ENCODE measurements at regions of chr5 and their contacts with region 1.

Region 1: DNA sequence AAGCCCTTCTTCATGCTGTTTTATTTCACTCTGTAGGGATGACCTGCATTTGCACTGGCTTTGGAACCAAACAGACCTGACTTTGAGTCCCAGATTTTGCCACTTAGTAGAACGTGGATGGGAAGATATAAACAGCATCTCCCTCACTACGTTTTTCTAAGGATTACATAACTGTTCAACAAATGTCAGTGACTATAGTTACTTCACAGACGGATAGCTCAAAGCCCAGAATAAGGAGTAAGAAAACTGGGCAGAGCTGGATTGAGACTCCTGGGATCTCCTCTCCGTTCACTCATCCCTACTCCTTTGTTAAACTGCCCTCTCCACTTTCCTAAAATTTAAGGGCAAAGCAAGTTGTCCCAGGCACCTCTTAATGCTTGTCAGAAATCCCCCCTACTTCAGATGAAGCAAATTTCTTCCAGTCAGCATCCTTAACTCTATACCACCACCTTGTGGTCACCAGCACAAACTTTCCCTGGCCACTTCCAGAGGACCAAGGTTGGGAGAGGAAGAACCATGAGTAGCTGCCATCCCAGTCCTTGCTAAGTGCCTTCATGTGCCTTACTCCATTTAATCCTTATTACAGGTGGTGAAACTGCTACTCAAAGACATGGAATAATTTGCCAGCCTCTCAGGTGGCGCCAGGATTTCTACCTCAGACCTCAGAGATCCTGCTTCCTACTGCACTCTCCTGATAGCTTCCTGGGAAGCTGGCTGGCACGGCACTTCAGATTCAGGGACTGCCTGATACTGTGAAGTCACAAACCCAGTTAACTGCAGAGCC is 38.4 kb downstream of the EGR1 start:
- DNase-seq: peak; percentile 86
- H3K4me3 Mint-ChIP-seq: no peak overlapping the region
- H3K27ac Mint-ChIP-seq: no peak overlapping the region
- H3K4me1 Mint-ChIP-seq: peaks cover 58% of the 10 kb centered on the region
- H3K27me3 Mint-ChIP-seq: no peaks in the 10 kb centered on the region
- CTCF ChIP-seq: peak; percentile 79

Region 2: GRCh38 chr5:138458384-138458783 is 45.3 kb before region 1 on chr5:
- CTCF ChIA-PET with region 1: interaction called, 278 read pairs
- POLR2A ChIA-PET with region 1: interaction called, 626 read pairs
- intact Hi-C with region 1: no loop called
- DNase-seq: no peak
- H3K4me3 Mint-ChIP-seq: no peak overlapping the region
- H3K27ac Mint-ChIP-seq: no peak overlapping the region
- H3K4me1 Mint-ChIP-seq: peaks cover 15% of the 10 kb centered on the region
- H3K27me3 Mint-ChIP-seq: no peaks in the 10 kb centered on the region
- CTCF ChIP-seq: no peak

Region 3: GRCh38 chr5:138469540-138470321 is 33.9 kb before region 1 on chr5:
- CTCF ChIA-PET with region 1: interaction called, 268 read pairs
- POLR2A ChIA-PET with region 1: interaction called, 626 read pairs
- intact Hi-C with region 1: loop called (anchors 1 kb)
- DNase-seq: peak; percentile 78
- H3K4me3 Mint-ChIP-seq: no peak overlapping the region
- H3K27ac Mint-ChIP-seq: peak overlapping the region; percentile 93
- H3K4me1 Mint-ChIP-seq: peaks cover 35% of the 10 kb centered on the region
- H3K27me3 Mint-ChIP-seq: peaks cover 20% of the 10 kb centered on the region
- CTCF ChIP-seq: no peak

Region 4: GRCh38 chr5:138491669-138492559 is 11.8 kb before region 1 on chr5:
- CTCF ChIA-PET with region 1: interaction called, 73 read pairs
- POLR2A ChIA-PET with region 1: interaction called, 29 read pairs
- intact Hi-C with region 1: no loop called
- DNase-seq: peak; percentile 97
- H3K4me3 Mint-ChIP-seq: peak overlapping the region; percentile 94
- H3K27ac Mint-ChIP-seq: peak overlapping the region; percentile 70
- H3K4me1 Mint-ChIP-seq: peaks cover 45% of the 10 kb centered on the region
- H3K27me3 Mint-ChIP-seq: no peaks in the 10 kb centered on the region
- CTCF ChIP-seq: no peak

Region 5: DNA sequence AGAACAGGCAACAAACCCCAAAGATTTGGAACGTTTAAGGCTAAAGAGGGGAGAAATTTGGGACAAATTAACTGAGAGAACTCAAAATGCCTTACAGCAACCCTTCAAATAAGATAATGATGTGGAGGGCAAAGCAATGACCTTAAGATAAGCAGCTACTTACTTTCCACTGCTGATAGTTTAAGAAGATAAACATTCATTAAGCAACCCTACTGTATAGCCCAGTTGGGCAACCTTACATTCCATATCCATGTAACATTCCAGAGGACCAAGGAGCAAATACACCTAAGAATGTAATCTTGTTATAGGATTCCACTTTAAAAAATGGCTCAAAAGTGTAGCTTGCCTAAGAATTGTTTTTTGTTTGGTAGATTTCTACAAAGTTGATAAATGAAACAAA is 24.5 kb after region 1 on chr5:
- CTCF ChIA-PET with region 1: interaction called, 166 read pairs
- POLR2A ChIA-PET with region 1: interaction called, 103 read pairs
- intact Hi-C with region 1: no loop called
- DNase-seq: peak; percentile 41
- H3K4me3 Mint-ChIP-seq: peak overlapping the region; percentile 1
- H3K27ac Mint-ChIP-seq: no peak overlapping the region
- H3K4me1 Mint-ChIP-seq: peaks cover 49% of the 10 kb centered on the region
- H3K27me3 Mint-ChIP-seq: no peaks in the 10 kb centered on the region
- CTCF ChIP-seq: no peak

Measured in MCF 10A (cell line).